GM12878 (cell line): ENCODE measurements at regions of chr17 and their contacts with region 1.

Region 1: DNA sequence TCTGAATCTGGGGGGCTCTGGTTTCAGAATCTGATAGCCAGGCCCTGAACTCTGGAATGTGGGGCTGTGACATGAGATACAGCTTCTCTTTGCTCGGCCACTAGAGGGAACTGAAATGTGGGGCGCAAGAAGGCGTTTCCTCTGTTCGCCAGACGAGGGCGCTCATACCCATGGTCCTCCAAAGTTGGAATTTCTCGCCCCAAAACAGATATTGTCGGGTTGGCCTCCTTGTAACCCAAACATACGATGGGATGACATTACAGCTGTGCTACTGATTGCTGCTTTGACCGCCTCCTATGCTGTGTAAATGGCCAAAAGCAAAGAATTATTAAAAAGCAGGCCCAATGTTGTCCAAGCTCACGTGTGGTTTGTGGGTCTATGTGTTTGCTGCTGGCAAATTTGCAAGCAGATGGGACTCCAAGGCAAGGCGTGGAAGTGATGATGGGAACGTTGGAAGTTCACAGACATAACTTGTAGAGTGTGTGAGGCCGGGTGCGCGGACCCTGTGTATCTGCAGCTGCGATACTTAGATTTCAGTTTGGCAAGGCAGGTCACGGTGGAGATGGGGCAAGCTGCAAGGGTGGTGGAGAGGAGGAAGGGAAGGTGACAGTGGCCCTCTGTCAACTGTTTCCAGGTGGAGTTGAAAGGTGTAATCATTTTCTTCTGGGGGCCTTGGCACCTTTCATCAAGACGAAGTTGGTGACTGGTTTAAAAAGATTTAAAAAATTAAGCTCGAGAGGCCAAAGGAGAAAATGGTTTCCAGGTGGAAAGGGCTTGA is 13.0 kb upstream of the MSI2 start:
- DNase-seq: peak; percentile 50
- ATAC-seq: peak; percentile 93
- H3K4me3 ChIP-seq: no peak overlapping the region
- H3K27ac ChIP-seq: no peak overlapping the region
- H3K4me1 ChIP-seq: no peaks in the 10 kb centered on the region
- H3K27me3 ChIP-seq: no peaks in the 10 kb centered on the region
- CTCF ChIP-seq: peak; percentile 100; a peak in 5 of 6 replicates
- EP300 ChIP-seq: no peak
- POLR2A ChIP-seq: no peak
- RAD21 ChIP-seq: peak; percentile 97

Region 2: DNA sequence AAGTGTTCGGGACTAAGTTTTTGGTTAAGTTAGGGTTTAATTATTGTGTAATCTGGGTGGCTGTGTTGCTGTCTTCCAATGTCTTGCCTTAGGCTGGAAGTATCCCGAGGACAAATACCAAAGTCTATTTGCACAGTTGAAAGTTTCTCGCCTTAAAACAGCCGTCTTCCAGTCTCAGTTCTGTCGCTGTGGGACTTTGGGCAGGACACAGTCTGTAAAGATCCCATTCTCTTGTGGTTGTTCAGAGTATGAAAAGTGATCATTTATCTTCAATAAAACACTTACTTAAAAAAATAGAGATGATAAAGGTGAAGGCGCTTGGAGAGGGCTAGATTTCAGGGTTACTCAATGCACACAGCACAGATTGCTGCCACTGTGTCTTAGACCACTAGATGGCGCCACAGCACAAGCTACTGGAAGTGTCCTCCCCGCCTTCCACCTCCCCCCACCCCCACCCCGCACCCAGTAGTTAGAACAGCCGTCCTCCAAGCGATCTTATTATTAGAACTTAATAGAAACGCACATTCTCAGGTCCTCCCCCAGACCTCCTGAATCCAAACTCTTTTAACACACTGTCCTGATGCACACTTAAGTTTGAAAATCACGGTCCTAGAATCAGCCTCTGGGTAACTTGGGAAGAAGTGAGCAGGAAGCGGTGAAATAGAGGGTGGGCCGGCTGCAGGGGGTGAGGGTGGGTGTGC is 112.4 kb before region 1 on chr17:
- CTCF ChIA-PET with region 1: interaction called, 8 read pairs
- POLR2A ChIA-PET with region 1: no interaction called
- RAD21 ChIA-PET with region 1: no interaction called
- SMC1A ChIA-PET with region 1: interaction called, 3 read pairs
- in situ Hi-C with region 1: no loop called
- intact Hi-C with region 1: loop called (anchors 2 kb)
- DNase-seq: peak; percentile 25
- ATAC-seq: peak; percentile 99
- H3K4me3 ChIP-seq: no peak overlapping the region
- H3K27ac ChIP-seq: no peak overlapping the region
- H3K4me1 ChIP-seq: peaks cover 5% of the 10 kb centered on the region
- H3K27me3 ChIP-seq: no peaks in the 10 kb centered on the region
- CTCF ChIP-seq: peak; percentile 59 to 84 (median 80)
- EP300 ChIP-seq: no peak
- POLR2A ChIP-seq: no peak
- RAD21 ChIP-seq: peak; percentile 79

Region 3: DNA sequence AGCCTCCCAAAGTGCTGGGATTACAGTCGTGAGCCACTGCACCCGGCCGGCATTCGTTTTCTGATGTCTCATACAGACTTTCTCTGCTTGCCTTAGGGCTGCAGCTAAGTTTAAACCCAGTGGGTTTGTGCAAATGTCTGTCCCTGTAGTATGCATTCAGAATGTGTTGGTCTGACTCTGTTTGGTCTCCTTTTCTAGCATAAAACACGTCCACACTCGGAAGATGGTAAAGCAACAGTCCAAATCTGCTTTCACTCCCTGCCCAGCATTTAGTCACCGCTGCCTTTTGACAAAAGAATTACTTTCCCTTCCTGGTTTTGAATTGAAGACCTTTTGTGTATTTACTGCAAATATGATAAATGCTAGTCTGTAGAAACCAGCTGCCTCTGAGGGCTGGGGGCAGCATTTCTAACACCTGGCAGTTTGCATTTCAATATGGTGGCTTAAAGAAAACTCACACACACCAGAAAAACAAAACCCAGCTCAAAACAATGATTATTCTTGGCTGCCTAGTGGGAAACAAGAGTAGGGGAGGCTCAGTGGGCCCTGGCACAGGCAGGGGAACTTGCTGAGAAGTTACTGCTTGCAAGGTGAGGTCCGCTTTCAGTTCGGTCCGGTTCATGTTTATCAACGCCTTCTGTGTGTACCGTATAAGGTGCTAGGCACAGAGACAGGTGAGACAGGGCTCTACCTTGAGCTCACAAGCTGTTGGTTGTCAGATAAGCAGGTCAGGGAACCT is 69.9 kb after region 1 on chr17:
- CTCF ChIA-PET with region 1: interaction called, 10 read pairs
- POLR2A ChIA-PET with region 1: no interaction called
- RAD21 ChIA-PET with region 1: interaction called, 3 read pairs
- SMC1A ChIA-PET with region 1: interaction called, 7 read pairs
- in situ Hi-C with region 1: no loop called
- intact Hi-C with region 1: no loop called
- DNase-seq: no peak
- ATAC-seq: no peak
- H3K4me3 ChIP-seq: no peak overlapping the region
- H3K27ac ChIP-seq: no peak overlapping the region
- H3K4me1 ChIP-seq: no peaks in the 10 kb centered on the region
- H3K27me3 ChIP-seq: no peaks in the 10 kb centered on the region
- CTCF ChIP-seq: no peak
- EP300 ChIP-seq: no peak
- POLR2A ChIP-seq: no peak
- RAD21 ChIP-seq: no peak

Region 4: GRCh38 chr17:57408071-57408811 is 164.9 kb after region 1 on chr17:
- CTCF ChIA-PET with region 1: interaction called, 150 read pairs
- POLR2A ChIA-PET with region 1: interaction called, 3 read pairs
- RAD21 ChIA-PET with region 1: interaction called, 71 read pairs
- SMC1A ChIA-PET with region 1: interaction called, 30 read pairs
- in situ Hi-C with region 1: no loop called
- intact Hi-C with region 1: loop called (anchors 2 kb)
- DNase-seq: peak; percentile 46
- ATAC-seq: peak; percentile 92
- H3K4me3 ChIP-seq: no peak overlapping the region
- H3K27ac ChIP-seq: peak overlapping the region; percentile 54
- H3K4me1 ChIP-seq: peaks cover 9% of the 10 kb centered on the region
- H3K27me3 ChIP-seq: no peaks in the 10 kb centered on the region
- CTCF ChIP-seq: peak in 1 of 3 experiments; percentile 10; a peak in 1 of 6 replicates
- EP300 ChIP-seq: no peak
- POLR2A ChIP-seq: no peak
- RAD21 ChIP-seq: no peak

Region 5: DNA sequence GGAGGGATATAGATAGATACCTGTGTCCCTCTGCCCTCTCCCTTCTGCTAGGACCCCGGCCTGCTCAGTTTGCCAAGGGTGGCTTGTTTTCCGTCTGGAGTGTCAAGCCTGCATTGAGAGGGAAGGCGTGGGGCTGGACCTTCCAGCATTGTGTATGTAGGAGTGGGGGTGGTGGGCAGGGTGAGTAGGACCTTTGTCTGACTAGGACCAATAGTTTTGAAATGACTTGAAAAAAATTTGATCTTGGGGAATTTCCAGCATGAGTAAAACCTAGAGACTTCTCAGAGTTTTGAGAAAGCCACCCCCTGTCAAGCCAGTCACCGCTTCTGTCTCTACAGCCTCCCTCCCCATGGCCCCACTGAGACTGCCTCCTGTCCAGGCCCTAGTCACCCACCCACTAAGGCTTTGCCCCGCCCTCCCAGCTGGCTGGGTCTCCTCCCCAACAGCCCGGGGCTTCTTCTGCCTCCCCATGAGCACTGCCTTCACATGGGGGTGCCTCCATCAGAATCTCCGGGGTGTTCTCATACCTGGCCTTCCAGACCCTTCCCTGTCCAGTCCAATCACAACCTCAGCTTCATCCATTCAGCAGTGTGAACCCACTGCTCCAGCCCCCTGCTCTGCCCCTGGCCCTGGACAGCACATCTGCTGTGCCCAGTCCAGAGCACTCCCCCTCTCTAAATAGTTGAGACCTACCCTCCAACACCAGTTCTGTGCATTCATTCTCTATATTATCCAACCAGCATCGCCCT is 219.9 kb after region 1 on chr17:
- CTCF ChIA-PET with region 1: interaction called, 25 read pairs
- POLR2A ChIA-PET with region 1: no interaction called
- RAD21 ChIA-PET with region 1: interaction called, 4 read pairs
- SMC1A ChIA-PET with region 1: interaction called, 6 read pairs
- in situ Hi-C with region 1: no loop called
- intact Hi-C with region 1: no loop called
- DNase-seq: peak; percentile 97
- ATAC-seq: peak; percentile 91
- H3K4me3 ChIP-seq: peak overlapping the region; percentile 55
- H3K27ac ChIP-seq: peak overlapping the region; percentile 99
- H3K4me1 ChIP-seq: peaks cover 91% of the 10 kb centered on the region
- H3K27me3 ChIP-seq: no peaks in the 10 kb centered on the region
- CTCF ChIP-seq: no peak
- EP300 ChIP-seq: peak; percentile 95 to 96
- POLR2A ChIP-seq: peak; percentile 75
- RAD21 ChIP-seq: no peak

Region 6: GRCh38 chr17:57597531-57598453 is 354.4 kb after region 1 on chr17:
- CTCF ChIA-PET with region 1: interaction called, 18 read pairs
- POLR2A ChIA-PET with region 1: interaction called, 4 read pairs
- RAD21 ChIA-PET with region 1: interaction called, 4 read pairs
- SMC1A ChIA-PET with region 1: interaction called, 7 read pairs
- in situ Hi-C with region 1: no loop called
- intact Hi-C with region 1: no loop called
- DNase-seq: no peak
- ATAC-seq: no peak
- H3K4me3 ChIP-seq: no peak overlapping the region
- H3K27ac ChIP-seq: no peak overlapping the region
- H3K4me1 ChIP-seq: peaks cover 16% of the 10 kb centered on the region
- H3K27me3 ChIP-seq: no peaks in the 10 kb centered on the region
- CTCF ChIP-seq: peak; percentile 49 to 72 (median 61)
- EP300 ChIP-seq: no peak
- POLR2A ChIP-seq: no peak
- RAD21 ChIP-seq: peak; percentile 57

Region 7: DNA sequence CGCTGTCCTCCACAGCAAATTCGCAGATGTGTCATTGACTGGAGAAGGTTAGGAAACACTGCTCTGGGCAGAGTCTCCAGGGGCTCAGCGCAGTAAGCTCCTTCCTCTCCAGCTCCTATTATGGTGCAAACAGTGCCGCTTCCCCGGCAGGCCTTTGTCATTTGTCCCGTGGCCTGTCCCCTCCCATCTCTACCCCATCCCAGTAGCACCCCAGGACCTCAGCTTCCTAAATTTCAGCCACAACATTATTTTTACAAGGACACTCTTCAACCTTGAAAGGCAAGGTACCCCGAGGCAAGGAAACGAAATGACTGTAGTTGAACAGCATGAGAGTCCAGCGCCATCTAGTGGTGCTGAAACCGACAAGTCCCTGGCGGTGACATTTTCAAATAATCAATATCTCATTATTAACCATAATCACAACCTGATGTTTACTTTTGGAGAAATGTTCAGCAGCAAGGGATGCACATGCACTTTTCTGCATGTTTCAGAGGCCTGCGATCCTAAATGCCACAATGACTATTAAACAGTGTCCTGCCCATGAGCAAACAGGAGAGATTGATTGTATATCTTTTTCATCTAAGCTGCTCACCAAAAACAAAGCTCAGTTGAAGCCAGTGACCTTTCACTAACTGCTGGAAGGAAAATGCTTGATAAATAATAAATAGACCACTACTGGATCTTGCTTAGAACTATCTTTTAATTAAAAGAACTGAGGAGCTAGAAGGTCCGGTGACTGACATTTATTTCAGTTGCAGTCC is 590.0 kb after region 1 on chr17:
- CTCF ChIA-PET with region 1: interaction called, 16 read pairs
- POLR2A ChIA-PET with region 1: no interaction called
- RAD21 ChIA-PET with region 1: no interaction called
- SMC1A ChIA-PET with region 1: interaction called, 6 read pairs
- in situ Hi-C with region 1: no loop called
- intact Hi-C with region 1: no loop called
- DNase-seq: no peak
- ATAC-seq: peak; percentile 95
- H3K4me3 ChIP-seq: 0 out of 2 replicates have a peak overlapping the region, but pooled peaks have one; percentile 4
- H3K27ac ChIP-seq: no peak overlapping the region
- H3K4me1 ChIP-seq: peaks cover 5% of the 10 kb centered on the region; the same call in 1 of the 2 replicates
- H3K27me3 ChIP-seq: no peaks in the 10 kb centered on the region
- CTCF ChIP-seq: peak; percentile 87 to 94 (median 92)
- EP300 ChIP-seq: no peak
- POLR2A ChIP-seq: no peak
- RAD21 ChIP-seq: peak; percentile 74